Prostate gland (tissue), 2 donors: ENCODE measurements at regions of chr10 and their contacts with region 1.

Region 1: DNA sequence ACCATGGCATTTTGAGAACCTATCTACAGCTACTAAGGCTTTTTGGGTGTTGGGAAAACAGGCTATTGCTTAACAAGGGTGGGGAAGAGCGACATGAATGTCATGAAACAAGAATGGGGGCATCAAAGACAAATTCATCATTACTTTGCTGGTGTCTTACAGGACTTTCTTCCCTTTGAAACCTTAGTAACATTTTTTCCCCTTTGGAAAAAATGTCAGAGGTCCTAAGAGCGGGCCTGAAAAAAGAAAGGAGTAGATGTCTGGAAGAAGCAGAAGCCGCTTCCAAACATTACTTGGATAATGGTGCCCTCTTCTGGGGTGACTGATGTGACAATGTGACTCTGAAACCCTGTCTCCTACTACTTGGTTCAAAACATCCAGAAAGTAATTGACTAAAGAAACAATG is 3.8 kb upstream of the DDX50 start:
- DNase-seq: peak; percentile 61
- H3K4me3 ChIP-seq: no peak overlapping the region
- H3K27ac ChIP-seq: no peak overlapping the region
- H3K4me1 ChIP-seq: peaks cover 1% of the 10 kb centered on the region
- H3K27me3 ChIP-seq: no peaks in the 10 kb centered on the region
- CTCF ChIP-seq: peak in 2 of 4 experiments; percentile 52 to 69
- POLR2A ChIP-seq: no peak

Region 2: GRCh38 chr10:68787813-68788212 is 109.5 kb before region 1 on chr10:
- intact Hi-C with region 1: loop called (anchors 5 kb)
- DNase-seq: no peak
- H3K4me3 ChIP-seq: no peak overlapping the region
- H3K27ac ChIP-seq: no peak overlapping the region
- H3K4me1 ChIP-seq: no peaks in the 10 kb centered on the region
- H3K27me3 ChIP-seq: no peaks in the 10 kb centered on the region
- CTCF ChIP-seq: no peak
- POLR2A ChIP-seq: no peak

Region 3: GRCh38 chr10:68813559-68813958 is 83.8 kb before region 1 on chr10:
- intact Hi-C with region 1: no loop called
- DNase-seq: no peak
- H3K4me3 ChIP-seq: no peak overlapping the region
- H3K27ac ChIP-seq: no peak overlapping the region
- H3K4me1 ChIP-seq: no peaks in the 10 kb centered on the region
- H3K27me3 ChIP-seq: no peaks in the 10 kb centered on the region
- CTCF ChIP-seq: no peak
- POLR2A ChIP-seq: no peak